ENCODE measurements at regions of chr1 and their contacts with region 1.

Region 1: DNA sequence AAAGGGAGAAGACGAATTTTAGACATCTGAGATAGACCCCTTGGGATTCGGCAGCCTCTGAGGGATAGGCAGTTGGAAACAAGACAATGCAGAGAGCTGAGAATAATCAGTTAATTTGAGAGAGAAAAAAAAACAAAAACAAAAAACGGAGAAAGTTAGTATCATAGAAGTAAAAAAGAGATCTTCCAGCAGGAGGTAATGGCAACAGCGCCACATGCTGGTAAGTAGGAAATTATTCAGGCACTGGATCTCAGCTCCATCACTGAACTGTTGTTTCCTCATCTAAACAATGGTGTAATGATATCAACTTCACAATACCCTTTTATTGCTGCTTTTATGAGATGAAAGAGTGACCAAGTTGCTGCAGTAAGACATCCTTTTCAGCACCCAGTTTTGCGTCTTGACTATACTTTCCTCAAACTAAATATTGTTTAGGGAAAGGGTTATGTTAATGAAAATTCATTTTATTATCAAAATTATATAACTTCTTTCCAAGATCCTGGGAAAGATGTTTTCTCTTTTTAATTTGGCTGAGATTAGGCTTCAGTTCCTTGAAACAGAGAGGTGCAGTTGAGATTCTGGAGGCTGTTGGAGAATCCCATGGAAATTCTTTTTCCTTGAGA is 91.4 kb upstream of the KCNA3 start:
- DNase-seq: no peak
- ATAC-seq: peak; percentile 26; the same call in 1 of the 2 replicates
- H3K4me3 Mint-ChIP-seq: peak overlapping the region; percentile 14; the same call in 1 of the 2 replicates
- H3K27ac Mint-ChIP-seq: no peak overlapping the region
- H3K4me1 Mint-ChIP-seq: peaks cover 3% of the 10 kb centered on the region; the same call in 1 of the 2 replicates
- H3K27me3 Mint-ChIP-seq: peaks cover 15% of the 10 kb centered on the region
- CTCF ChIP-seq: peak; percentile 73

Region 2: GRCh38 chr1:110579460-110579859 is 186.7 kb before region 1 on chr1:
- CTCF ChIA-PET with region 1: no interaction called
- POLR2A ChIA-PET with region 1: no interaction called
- DNase-seq: no peak
- ATAC-seq: no peak
- H3K4me3 Mint-ChIP-seq: no peak overlapping the region
- H3K27ac Mint-ChIP-seq: no peak overlapping the region
- H3K4me1 Mint-ChIP-seq: no peaks in the 10 kb centered on the region
- H3K27me3 Mint-ChIP-seq: peaks cover 74% of the 10 kb centered on the region
- CTCF ChIP-seq: no peak

Region 3: GRCh38 chr1:110638058-110638457 is 128.1 kb before region 1 on chr1:
- CTCF ChIA-PET with region 1: interaction called, 23 read pairs
- POLR2A ChIA-PET with region 1: interaction called, 3 read pairs
- DNase-seq: no peak
- ATAC-seq: peak; percentile 67
- H3K4me3 Mint-ChIP-seq: no peak overlapping the region
- H3K27ac Mint-ChIP-seq: no peak overlapping the region
- H3K4me1 Mint-ChIP-seq: no peaks in the 10 kb centered on the region
- H3K27me3 Mint-ChIP-seq: peaks cover 7% of the 10 kb centered on the region; the same call in 1 of the 2 replicates
- CTCF ChIP-seq: no peak

Region 4: GRCh38 chr1:110645821-110646735 is 120.1 kb before region 1 on chr1:
- CTCF ChIA-PET with region 1: interaction called, 12 read pairs
- POLR2A ChIA-PET with region 1: interaction called, 3 read pairs
- DNase-seq: no peak
- ATAC-seq: no peak
- H3K4me3 Mint-ChIP-seq: no peak overlapping the region
- H3K27ac Mint-ChIP-seq: no peak overlapping the region
- H3K4me1 Mint-ChIP-seq: no peaks in the 10 kb centered on the region
- H3K27me3 Mint-ChIP-seq: peaks cover 6% of the 10 kb centered on the region; the same call in 1 of the 2 replicates
- CTCF ChIP-seq: no peak

Region 5: GRCh38 chr1:110708974-110709440 is 57.1 kb before region 1 on chr1:
- CTCF ChIA-PET with region 1: interaction called, 10 read pairs
- POLR2A ChIA-PET with region 1: no interaction called
- DNase-seq: no peak
- ATAC-seq: no peak
- H3K4me3 Mint-ChIP-seq: no peak overlapping the region
- H3K27ac Mint-ChIP-seq: no peak overlapping the region
- H3K4me1 Mint-ChIP-seq: peaks cover 14% of the 10 kb centered on the region
- H3K27me3 Mint-ChIP-seq: no peaks in the 10 kb centered on the region; the same call in none of the 2 replicates
- CTCF ChIP-seq: no peak

Region 6: DNA sequence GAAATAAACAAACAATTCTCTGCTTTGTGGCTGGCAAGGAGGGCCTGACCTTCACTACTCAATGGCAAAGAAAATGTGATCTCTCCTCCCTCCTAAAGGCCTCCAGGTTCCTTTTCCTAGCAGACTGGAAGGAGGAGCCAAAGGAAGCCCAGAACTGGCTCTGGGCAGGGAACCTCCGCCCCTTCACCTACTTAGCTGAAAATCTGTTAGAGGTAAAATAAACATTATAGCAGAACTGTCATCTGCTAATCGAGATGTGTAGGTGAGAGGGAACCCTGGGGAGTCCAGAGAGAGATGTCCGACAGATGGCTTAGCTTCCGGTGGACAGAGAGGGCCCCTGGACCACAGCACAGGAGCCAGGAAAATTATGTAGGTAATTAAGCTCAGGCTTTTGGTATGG is 16.2 kb before region 1 on chr1:
- CTCF ChIA-PET with region 1: interaction called, 23 read pairs
- POLR2A ChIA-PET with region 1: no interaction called
- DNase-seq: no peak
- ATAC-seq: peak; percentile 50; the same call in 1 of the 2 replicates
- H3K4me3 Mint-ChIP-seq: no peak overlapping the region
- H3K27ac Mint-ChIP-seq: no peak overlapping the region
- H3K4me1 Mint-ChIP-seq: peaks cover 62% of the 10 kb centered on the region
- H3K27me3 Mint-ChIP-seq: peaks cover 2% of the 10 kb centered on the region; the same call in 1 of the 2 replicates
- CTCF ChIP-seq: no peak

Region 7: GRCh38 chr1:110829955-110830553 is 63.9 kb after region 1 on chr1:
- CTCF ChIA-PET with region 1: interaction called, 15 read pairs
- POLR2A ChIA-PET with region 1: no interaction called
- DNase-seq: peak; percentile 16
- ATAC-seq: peak; percentile 100
- H3K4me3 Mint-ChIP-seq: no peak overlapping the region
- H3K27ac Mint-ChIP-seq: no peak overlapping the region
- H3K4me1 Mint-ChIP-seq: peaks cover 4% of the 10 kb centered on the region
- H3K27me3 Mint-ChIP-seq: peaks cover 9% of the 10 kb centered on the region; the same call in 1 of the 2 replicates
- CTCF ChIP-seq: peak; percentile 69